Activated T-helper 2 cell treated with anti-CD3 and anti-CD28 coated beads, Interferon-gamma antibody, Interleukin-2, Interleukin-4, amounts not matched to agents 10 μg/mL and 5 μg/mL and 100 μg/mL, durations not matched to agents 14 hours and 24 hours and 36 hours (primary cell): ENCODE measurements at regions of chr14 and their contacts with region 1.

Region 1: GRCh38 chr14:50773632-50774541 is 57.1 kb downstream of the NIN start:
- DNase-seq: no peak
- H3K4me3 Mint-ChIP-seq: no peak overlapping the region
- H3K27ac Mint-ChIP-seq: no peak overlapping the region
- H3K4me1 Mint-ChIP-seq: peaks cover 15% of the 10 kb centered on the region
- H3K27me3 Mint-ChIP-seq: no peaks in the 10 kb centered on the region

Region 2: DNA sequence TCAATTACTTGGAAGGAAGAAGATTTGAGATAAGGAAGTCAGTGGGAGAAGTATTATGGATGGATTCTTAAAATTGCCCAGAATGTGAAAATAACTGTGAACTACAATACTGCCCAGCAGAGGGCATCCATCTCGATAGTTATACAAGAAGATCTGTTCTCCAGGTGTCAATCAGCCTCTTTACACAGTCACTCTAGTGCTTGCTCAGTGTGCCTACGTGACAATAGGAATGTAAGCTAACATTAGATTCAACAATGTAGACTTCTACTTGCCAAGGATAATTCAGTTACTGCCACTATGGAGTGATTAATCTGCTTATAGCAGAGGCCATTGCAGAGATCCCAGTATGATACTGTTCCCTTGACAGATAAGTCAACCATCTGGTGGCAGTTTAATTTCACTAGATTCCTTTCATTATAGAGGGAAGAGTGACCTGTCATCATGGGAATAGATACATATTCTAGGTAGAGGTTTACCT is 230.9 kb before region 1 on chr14:
- intact Hi-C with region 1: loop called (anchors 1 kb)
- DNase-seq: no peak
- H3K4me3 Mint-ChIP-seq: no peak overlapping the region
- H3K27ac Mint-ChIP-seq: no peak overlapping the region
- H3K4me1 Mint-ChIP-seq: peaks cover 12% of the 10 kb centered on the region
- H3K27me3 Mint-ChIP-seq: peaks cover 11% of the 10 kb centered on the region

Region 3: DNA sequence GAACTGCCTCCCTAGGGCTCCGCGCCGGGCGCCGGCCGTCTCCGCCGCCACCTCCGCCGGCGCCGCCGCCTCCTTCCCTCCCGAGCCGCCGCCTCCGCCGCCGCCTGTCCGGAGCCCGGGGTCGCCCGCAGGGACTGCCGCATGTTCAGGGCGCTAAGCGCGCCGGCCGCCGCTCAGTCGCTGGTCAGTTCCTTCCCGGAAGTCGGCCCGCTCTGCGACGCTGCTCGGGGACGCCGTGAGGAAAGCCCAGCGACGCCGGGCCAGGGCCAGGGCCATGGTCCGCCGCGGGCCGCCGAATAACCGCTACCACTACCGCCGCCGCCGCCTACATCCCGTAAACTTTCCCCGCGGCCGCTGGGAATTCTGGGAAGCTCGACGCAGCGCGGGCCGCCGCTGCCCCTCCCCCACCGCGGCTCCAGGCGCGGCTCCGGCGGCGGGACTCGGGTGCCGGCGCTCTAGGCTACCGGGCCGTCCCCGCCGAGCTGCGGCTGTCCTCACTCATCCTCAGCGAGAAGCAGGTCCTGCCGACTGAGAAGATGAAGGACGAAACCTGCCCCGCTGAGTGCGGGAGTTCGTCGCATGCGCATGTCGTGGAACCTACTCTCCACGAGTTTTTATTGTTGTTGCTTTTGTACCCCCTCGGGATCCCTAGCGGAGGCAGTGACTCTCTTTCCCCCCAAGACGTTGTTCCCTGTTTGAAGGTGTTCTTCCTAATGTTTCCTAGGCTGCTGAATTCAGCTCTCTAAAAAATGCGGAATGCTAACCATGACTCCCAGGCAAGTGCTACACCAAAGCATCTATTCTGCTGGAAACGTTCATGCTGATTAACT is 105.7 kb before region 1 on chr14 and contains the start of gene SAV1:
- intact Hi-C with region 1: loop called (anchors 5 kb)
- DNase-seq: peak; percentile 36
- H3K4me3 Mint-ChIP-seq: no peak within 1 kb of the TSS
- H3K27ac Mint-ChIP-seq: peak within 1 kb of the TSS; percentile 47
- H3K4me1 Mint-ChIP-seq: peaks cover 15% of the 10 kb centered on the region
- H3K27me3 Mint-ChIP-seq: no peaks in the 10 kb centered on the region
- total RNA-seq, gene SAV1: 13.1 and 13.5 TPM in 2 replicates

Region 4: GRCh38 chr14:50978888-50979287 is 205.0 kb after region 1 on chr14:
- intact Hi-C with region 1: no loop called
- DNase-seq: no peak
- H3K4me3 Mint-ChIP-seq: no peak overlapping the region
- H3K27ac Mint-ChIP-seq: no peak overlapping the region
- H3K4me1 Mint-ChIP-seq: no peaks in the 10 kb centered on the region
- H3K27me3 Mint-ChIP-seq: peaks cover 3% of the 10 kb centered on the region

Region 5: DNA sequence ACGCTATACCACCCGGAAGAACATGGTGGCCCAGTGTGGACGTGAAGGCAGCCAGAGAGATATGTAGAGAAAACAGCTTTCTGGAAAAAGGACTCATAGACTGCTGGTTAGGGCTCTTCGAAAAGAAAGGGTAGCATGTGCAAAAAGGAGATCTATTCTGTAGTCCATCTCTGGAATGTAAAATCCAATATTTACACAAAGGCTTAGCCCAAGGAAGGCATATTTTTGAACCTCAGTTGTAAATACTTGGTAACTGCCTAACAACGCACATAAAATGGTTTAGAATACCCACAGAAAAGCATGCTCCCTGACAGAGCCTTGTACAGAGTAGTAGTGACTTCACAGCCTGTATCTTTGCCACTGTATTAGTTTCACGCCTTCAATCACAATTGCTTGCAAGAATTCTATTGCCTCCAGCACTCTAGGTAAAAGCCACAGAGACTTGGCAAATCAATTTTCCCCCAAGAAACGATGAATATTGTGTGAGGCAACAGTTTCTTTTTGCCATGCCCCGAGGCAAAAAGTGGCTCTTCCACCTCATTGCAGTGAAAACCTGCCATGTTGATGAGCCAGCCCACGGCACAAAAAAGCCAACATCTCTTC is 261.8 kb after region 1 on chr14:
- intact Hi-C with region 1: no loop called
- DNase-seq: no peak
- H3K4me3 Mint-ChIP-seq: no peak overlapping the region
- H3K27ac Mint-ChIP-seq: no peak overlapping the region
- H3K4me1 Mint-ChIP-seq: no peaks in the 10 kb centered on the region
- H3K27me3 Mint-ChIP-seq: no peaks in the 10 kb centered on the region